ENCODE measurements at regions of chr22 and their contacts with region 1.

Region 1: DNA sequence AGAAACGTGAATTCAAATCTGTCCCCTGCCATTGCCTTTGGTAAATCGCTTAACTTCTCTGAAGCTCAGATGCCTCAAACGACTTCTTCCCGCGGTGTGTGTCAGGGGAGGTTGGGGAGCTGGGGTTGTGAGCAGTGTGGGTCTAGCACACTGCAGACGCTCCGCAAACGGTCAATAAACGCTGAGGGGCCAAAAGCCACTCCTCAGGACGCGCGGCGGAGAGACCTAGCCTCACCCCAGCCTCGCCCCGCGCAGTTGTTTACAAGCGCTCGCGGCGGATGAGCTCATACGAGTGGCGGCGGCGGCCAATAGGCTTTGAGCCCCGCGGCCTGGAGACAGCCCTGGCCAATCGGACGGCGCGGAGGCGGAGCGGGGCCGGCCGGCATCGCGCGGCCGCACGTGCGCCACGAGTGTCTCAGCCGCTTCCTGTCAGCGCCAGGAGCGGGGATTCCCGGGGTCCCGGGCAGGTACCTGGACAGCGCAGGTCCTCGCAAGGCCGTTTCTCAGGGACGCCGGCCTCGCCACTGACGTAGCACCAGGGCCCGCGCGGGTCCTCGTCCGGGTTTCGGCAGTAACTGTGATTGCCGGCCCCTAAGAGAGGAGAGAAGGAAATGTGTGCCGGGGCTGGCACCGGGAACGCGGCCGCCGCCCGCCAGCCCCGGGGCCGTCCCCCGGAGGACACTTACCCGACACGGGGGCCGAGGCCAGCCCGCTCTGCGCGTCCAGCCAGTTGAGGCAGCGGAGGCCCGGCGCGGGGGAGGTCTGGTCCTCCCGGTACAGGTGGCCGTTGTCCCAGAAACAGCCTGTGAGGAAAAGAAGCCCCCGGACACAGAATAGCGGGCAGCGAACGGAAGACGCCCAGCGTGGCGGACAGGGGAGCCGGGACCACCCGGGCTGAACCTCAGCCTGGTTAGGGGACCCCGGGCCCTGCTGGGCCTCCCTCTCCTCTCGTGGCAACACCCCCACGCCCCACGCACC is 1.5 kb downstream of the PIK3IP1 start:
- DNase-seq: peak; percentile 98
- H3K4me3 ChIP-seq: peak overlapping the region; percentile 71 to 87 (median 82)
- H3K27ac ChIP-seq: peak overlapping the region; percentile 92 to 98 (median 97)
- H3K4me1 ChIP-seq: peaks cover 0 to 74% (median 68%) of the 10 kb centered on the region in 4 donors
- H3K27me3 ChIP-seq: no peaks in the 10 kb centered on the region
- CTCF ChIP-seq: no peak
- EP300 ChIP-seq: peak in 1 of 4 donors; percentile 22
- POLR2A ChIP-seq: peak; percentile 78 to 82

Region 2: GRCh38 chr22:31139866-31140716 is 150.7 kb before region 1 on chr22 and contains the start of gene PLA2G3:
- intact Hi-C with region 1: no loop called
- DNase-seq: no peak
- H3K4me3 ChIP-seq: no peak within 1 kb of the TSS
- H3K27ac ChIP-seq: no peak within 1 kb of the TSS
- H3K4me1 ChIP-seq: no peaks in the 10 kb centered on the region
- H3K27me3 ChIP-seq: peaks cover 0 to 24% (median 16%) of the 10 kb centered on the region in 3 donors
- CTCF ChIP-seq: no peak
- EP300 ChIP-seq: no peak
- POLR2A ChIP-seq: no peak
- total RNA-seq, gene PLA2G3: not detected

Region 3: DNA sequence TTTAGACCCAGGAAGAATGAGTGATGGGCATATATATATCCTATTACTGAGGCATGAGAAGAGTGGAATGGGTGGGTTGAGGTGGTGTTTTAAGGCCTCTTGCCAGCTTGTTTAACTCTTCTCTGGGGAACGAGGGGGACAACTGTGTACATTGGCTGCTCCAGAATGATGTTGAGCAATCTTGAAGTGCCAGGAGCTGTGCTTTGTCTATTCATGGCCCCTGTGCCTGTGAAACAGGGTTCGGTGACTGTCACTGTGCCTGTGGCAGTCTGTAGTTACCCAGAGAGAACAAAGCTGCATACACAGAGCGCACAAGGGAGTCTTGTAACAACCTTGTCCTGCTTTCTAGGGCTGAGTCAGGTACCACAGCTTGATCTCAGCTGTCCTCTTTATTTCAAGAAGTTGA is 67.0 kb before region 1 on chr22:
- intact Hi-C with region 1: no loop called
- DNase-seq: no peak
- H3K4me3 ChIP-seq: no peak overlapping the region
- H3K27ac ChIP-seq: no peak overlapping the region
- H3K4me1 ChIP-seq: peaks cover 0 to 49% (median 12%) of the 10 kb centered on the region in 4 donors
- H3K27me3 ChIP-seq: no peaks in the 10 kb centered on the region
- CTCF ChIP-seq: no peak
- EP300 ChIP-seq: no peak
- POLR2A ChIP-seq: no peak

Region 4: DNA sequence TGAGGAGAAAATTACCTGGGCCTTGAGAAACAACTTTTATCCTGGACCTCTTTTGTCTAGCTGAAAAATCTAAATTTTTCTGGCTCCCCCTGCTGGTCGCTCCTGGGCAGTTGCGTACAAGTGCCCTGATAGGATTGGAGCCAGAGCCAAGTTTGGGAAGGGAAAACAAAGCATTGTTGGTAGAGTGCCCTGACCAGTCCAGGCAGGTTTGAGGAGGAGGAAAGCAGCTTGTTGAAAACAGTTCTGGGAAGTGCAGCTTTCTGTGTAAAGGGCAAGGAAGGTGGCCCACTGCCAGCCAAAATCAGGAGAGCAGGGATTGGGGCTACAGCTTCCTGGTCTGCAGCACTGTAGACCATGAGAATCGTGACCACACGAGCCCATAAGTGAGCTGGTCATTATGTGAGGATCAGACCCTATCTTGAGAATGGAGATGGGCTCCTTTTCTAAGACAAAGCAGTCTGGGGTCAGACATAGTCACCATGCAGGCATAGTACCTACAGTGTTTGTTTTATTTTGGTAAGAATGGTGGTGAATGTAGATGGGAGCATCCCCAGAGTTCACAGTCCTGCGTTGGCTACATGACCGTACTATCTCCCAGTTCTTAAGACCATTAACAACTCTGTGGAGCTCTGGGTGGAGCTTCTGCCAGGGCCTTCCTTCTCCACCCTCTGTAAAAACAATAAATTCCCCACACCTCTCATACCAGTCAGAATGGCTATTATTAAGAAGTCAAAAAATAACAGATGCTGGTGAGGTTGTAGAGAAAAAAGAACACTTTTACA is 22.8 kb after region 1 on chr22:
- intact Hi-C with region 1: loop called (anchors 1 kb)
- DNase-seq: peak; percentile 88
- H3K4me3 ChIP-seq: no peak overlapping the region
- H3K27ac ChIP-seq: peak overlapping the region in 2 of 4 donors; percentile 51 to 63
- H3K4me1 ChIP-seq: peaks cover 0 to 10% (median 6%) of the 10 kb centered on the region in 4 donors
- H3K27me3 ChIP-seq: no peaks in the 10 kb centered on the region
- CTCF ChIP-seq: peak; percentile 56 to 86 (median 82)
- EP300 ChIP-seq: no peak
- POLR2A ChIP-seq: no peak

Region 5: DNA sequence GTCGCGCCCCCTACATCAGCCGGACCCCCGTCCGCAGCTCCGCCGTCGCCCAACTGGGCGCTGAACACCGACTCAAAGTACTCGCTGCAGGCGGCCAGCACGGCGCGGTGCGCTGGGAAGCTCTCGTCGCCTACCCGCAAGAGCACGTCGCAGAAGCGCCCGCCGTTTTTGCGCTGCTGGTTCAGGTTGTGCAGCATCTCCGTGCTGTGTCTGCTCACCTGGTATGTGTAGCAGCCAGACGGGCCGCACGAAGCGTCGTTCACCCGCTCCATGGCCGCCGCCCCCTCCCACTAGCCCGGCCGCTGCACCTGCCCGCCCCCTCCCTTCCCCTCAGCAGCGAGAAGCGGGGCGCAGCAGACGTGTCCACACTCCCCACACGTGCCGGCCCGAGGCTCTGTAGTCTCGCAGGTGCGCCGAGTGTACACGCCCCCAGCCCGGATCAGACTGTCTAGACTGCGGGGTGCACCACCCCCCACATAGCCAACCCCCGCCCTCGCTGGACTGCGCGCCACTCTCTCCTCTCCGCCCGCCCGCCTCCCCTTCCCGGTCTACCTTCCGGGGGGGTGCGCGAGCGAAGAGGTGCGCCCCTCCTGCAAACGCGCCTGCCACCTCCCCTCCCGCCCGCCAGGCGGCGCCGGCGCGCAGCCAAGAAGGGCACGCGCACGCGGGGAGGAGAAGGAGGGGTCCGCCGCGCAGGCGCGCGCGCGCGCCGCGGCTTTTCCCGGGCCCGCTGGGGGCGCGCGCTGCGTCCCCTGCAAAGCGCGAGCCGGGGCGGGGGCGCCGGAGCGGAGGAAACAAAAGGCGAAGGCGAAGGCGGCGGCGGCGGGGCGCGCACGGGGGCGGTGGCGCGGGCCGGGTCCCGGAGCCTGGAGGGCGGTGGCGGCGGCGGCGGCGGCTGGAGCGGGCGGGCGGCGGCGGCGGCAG is 54.8 kb after region 1 on chr22:
- intact Hi-C with region 1: loop called (anchors 2 kb)
- DNase-seq: peak; percentile 90
- H3K4me3 ChIP-seq: peak overlapping the region; percentile 60 to 79 (median 66)
- H3K27ac ChIP-seq: peak overlapping the region; percentile 88 to 93 (median 90)
- H3K4me1 ChIP-seq: peaks cover 0 to 59% (median 41%) of the 10 kb centered on the region in 4 donors
- H3K27me3 ChIP-seq: no peaks in the 10 kb centered on the region
- CTCF ChIP-seq: peak; percentile 70 to 90 (median 82)
- EP300 ChIP-seq: no peak
- POLR2A ChIP-seq: no peak